ENCODE measurements at regions of chr14 and their contacts with region 1.

Region 1: DNA sequence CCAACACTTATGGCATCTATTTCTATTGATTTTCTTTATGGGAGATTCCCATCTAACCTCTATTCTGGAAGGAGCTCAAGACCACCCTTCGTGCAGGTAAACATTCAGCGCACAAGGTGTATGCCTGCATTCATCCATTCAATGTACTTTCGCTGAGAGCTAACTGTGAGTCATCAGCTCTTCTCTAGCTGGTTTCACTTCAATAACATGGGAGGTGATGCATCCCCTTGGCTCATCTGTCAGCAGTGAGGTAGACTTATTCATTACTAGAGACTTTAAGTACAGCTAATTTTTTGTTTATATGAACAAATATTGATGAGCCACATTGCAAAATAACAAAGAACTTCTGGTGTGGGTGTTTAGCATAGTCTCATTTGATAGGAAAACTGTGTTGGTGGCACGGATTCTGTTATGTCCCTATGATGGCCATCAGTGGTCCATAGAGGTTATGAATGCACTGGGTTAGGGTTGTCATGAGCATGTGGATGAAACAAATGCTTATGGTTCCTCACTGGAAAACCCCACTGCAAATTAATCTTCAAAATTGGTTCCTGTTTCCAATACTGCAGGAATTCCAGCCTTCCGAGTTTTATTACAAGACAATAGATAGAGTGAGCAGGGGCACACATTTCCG is 1151.0 kb downstream of the BCL11B start:
- DNase-seq: no peak
- H3K4me3 Mint-ChIP-seq: no peak overlapping the region
- H3K27ac Mint-ChIP-seq: no peak overlapping the region
- H3K4me1 Mint-ChIP-seq: peaks cover 17% of the 10 kb centered on the region
- H3K27me3 Mint-ChIP-seq: no peaks in the 10 kb centered on the region

Region 2: DNA sequence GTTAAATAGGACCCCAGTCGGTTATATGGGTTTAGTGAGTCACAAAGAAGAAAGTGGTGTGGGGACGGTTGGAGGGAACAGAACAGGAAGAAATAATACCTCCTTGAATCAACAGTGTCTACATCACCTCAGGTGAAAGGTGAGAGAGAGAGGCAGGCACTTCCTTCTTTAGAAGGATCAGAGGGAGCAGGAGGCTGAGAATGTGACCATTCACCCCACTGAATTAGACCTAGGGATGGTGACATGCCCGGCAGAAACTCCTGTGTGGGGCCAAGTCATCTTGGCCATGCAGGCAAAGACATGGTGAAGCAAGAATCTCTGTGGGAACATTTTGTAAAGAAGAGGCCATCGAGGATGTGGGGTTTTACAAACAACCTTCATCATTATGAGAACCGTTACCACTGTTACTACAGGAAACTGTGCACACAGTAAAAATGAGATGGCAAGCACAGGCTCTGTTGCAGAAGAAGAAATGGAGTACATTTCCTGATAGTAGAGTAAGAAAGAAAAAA is 126.9 kb before region 1 on chr14:
- intact Hi-C with region 1: loop called (anchors 5 kb)
- DNase-seq: peak; percentile 37
- H3K4me3 Mint-ChIP-seq: peak overlapping the region; percentile 21
- H3K27ac Mint-ChIP-seq: peak overlapping the region; percentile 88
- H3K4me1 Mint-ChIP-seq: peaks cover 47% of the 10 kb centered on the region
- H3K27me3 Mint-ChIP-seq: no peaks in the 10 kb centered on the region

Region 3: DNA sequence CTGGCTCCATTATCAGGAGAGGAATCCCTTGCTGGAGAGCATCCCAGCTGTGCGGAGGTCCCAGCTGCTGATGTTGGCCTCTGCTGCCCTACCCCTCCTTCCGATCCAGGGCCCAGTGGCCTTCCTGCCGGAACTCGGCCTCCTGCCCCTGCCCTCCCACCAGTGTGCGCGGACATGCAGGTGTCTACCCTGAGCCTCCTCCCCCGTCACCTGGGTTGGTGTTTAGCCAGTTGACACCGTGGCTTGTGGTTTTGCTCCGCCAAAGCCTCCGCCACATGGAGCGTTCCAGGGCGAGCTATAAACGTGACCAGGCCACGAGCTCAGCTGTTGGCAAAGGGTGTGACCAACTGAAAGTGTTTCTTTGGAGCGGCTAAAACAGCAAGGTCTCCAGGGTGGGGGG is 46.8 kb after region 1 on chr14:
- intact Hi-C with region 1: no loop called
- DNase-seq: no peak
- H3K4me3 Mint-ChIP-seq: no peak overlapping the region
- H3K27ac Mint-ChIP-seq: peak overlapping the region; percentile 64
- H3K4me1 Mint-ChIP-seq: peaks cover 78% of the 10 kb centered on the region
- H3K27me3 Mint-ChIP-seq: no peaks in the 10 kb centered on the region

Region 4: GRCh38 chr14:98280436-98280835 is 159.5 kb after region 1 on chr14:
- intact Hi-C with region 1: no loop called
- DNase-seq: no peak
- H3K4me3 Mint-ChIP-seq: no peak overlapping the region
- H3K27ac Mint-ChIP-seq: no peak overlapping the region
- H3K4me1 Mint-ChIP-seq: no peaks in the 10 kb centered on the region
- H3K27me3 Mint-ChIP-seq: no peaks in the 10 kb centered on the region